ENCODE measurements at regions of chr1 and their contacts with region 1.

Region 1: GRCh38 chr1:229507951-229508822 is at the start of gene NUP133:
- DNase-seq: peak; percentile 99
- ATAC-seq: peak; percentile 96
- H3K4me3 ChIP-seq: peak within 1 kb of the TSS; percentile 84
- H3K27ac ChIP-seq: peak within 1 kb of the TSS; percentile 61
- H3K4me1 ChIP-seq: peaks cover 26% of the 10 kb centered on the region
- H3K27me3 ChIP-seq: no peaks in the 10 kb centered on the region
- CTCF ChIP-seq: no peak
- total RNA-seq, gene NUP133: 63.6 and 66.5 TPM in 2 replicates

Region 2: DNA sequence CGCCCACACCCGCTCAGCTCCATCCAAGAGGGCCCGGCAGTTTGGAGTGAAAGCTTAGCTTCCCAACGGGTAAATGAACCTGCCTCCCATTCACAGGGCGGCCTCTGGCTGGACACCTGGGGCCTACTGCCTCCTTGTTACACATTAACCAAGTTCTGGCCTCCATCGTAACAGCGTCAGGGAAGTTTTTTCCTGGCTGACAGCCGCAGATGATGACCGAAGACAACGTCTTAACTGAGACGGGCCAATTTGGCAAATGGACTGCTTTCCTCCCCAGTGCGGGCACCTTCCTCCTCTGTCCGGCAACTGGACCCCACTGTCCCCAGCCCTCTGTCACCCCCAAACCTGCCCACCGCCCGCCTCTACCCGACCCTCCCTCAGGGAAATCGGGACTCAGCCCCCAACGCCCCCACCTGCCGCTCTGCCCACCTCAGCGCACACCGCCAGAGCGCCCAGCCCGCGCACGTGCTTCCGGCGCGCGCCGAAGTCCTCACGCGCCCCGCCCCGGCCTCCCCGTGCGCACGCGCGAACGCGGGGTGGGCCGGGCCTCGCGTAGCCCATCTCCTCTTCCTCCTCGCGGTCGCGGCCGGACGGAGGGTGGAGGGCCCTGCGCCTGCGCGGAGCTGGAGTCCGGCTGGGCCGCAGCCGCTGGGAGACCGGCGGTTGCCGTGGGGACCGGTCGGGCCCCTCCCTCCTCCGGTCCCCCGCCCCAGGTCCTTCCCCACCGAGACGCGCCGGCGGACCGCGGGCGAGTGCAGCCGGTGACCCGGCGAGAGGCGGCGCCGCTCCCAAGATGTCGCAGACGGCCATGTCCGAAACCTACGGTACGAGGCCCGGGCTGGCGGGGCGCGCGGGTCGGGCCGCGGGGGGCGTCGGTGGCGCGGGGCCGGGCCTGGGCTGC is 237.4 kb before region 1 on chr1 and contains the start of gene RAB4A:
- CTCF ChIA-PET with region 1: no interaction called
- POLR2A ChIA-PET with region 1: no interaction called
- intact Hi-C with region 1: loop called (anchors 5 kb)
- DNase-seq: peak; percentile 89
- ATAC-seq: peak; percentile 79
- H3K4me3 ChIP-seq: peak within 1 kb of the TSS; percentile 84
- H3K27ac ChIP-seq: no peak within 1 kb of the TSS
- H3K4me1 ChIP-seq: peaks cover 27% of the 10 kb centered on the region
- H3K27me3 ChIP-seq: no peaks in the 10 kb centered on the region
- CTCF ChIP-seq: no peak
- total RNA-seq, gene RAB4A: 33.9 and 67.0 TPM in 2 replicates

Region 3: GRCh38 chr1:229360417-229360816 is 147.8 kb before region 1 on chr1:
- CTCF ChIA-PET with region 1: no interaction called
- POLR2A ChIA-PET with region 1: no interaction called
- intact Hi-C with region 1: no loop called
- DNase-seq: no peak
- ATAC-seq: no peak
- H3K4me3 ChIP-seq: no peak overlapping the region
- H3K27ac ChIP-seq: no peak overlapping the region
- H3K4me1 ChIP-seq: no peaks in the 10 kb centered on the region
- H3K27me3 ChIP-seq: peaks cover 59% of the 10 kb centered on the region
- CTCF ChIP-seq: no peak

Region 4: GRCh38 chr1:229625915-229626831 is 118.0 kb after region 1 on chr1 and contains the starts of genes TAF5L and URB2:
- CTCF ChIA-PET with region 1: interaction called, 4 read pairs
- POLR2A ChIA-PET with region 1: no interaction called
- intact Hi-C with region 1: loop called (anchors 1 kb)
- DNase-seq: peak; percentile 97
- ATAC-seq: peak; percentile 90
- H3K4me3 ChIP-seq: peak within 1 kb of the TSS; percentile 99
- H3K27ac ChIP-seq: peak within 1 kb of the TSS; percentile 43
- H3K4me1 ChIP-seq: peaks cover 26% of the 10 kb centered on the region
- H3K27me3 ChIP-seq: no peaks in the 10 kb centered on the region
- CTCF ChIP-seq: no peak
- total RNA-seq, gene TAF5L: 24.2 and 28.3 TPM in 2 replicates
- total RNA-seq, gene URB2: 24.0 and 26.2 TPM in 2 replicates

Measured in PC-3 (cell line).